Activated CD4-positive, alpha-beta T cell treated with anti-CD3 and anti-CD28 coated beads, Interleukin-2, amount 10 ng/mL, durations not matched to agents 7 days and 5 days (primary cell): ENCODE measurements at regions of chr10 and their contacts with region 1.

Region 1: DNA sequence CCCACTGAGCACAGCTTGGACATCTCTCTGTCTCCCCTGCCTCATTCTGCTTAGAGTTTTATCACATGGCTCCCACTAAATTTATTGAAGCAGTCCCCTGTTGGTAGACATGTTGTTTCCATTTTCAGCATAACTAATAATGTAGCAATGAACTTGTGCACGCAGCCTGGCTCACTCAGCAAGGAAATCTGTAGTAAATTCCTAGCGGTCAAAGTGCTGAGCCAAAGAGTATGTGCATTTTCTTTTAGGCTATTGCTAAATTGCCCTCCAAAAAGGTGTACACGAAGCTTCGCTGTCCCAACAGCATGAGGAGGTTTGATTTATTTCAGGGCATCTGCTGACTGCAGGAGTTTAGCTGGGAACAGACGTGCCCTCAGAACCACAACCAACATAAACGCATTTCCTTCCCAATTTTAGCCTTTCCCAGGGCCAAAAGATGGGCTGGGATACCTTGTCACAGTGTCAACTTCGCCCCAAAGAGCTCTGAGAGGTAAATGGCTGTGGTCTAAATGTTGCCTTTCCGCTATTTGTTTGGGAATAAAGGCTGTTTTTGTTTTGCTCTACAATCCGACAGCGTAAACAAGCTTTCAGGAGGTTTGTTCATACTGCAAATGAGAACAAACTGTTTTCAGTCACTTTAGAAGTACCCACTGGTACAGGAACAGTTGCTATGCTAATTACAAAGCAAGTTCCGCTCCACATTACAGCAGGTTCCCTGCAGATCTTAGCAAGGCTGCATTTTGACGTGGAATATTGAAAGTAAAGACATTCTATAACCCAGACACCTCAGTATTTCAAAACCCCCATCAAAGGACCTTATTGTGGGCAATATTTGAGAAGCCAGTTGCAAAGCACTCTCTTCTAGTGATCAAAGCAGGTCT is 16.8 kb downstream of the VSIR start:
- DNase-seq: peak; percentile 53
- H3K4me3 Mint-ChIP-seq: peak overlapping the region; percentile 50
- H3K27ac Mint-ChIP-seq: peak overlapping the region; percentile 93
- H3K4me1 Mint-ChIP-seq: peaks cover 89% of the 10 kb centered on the region
- H3K27me3 Mint-ChIP-seq: no peaks in the 10 kb centered on the region

Region 2: DNA sequence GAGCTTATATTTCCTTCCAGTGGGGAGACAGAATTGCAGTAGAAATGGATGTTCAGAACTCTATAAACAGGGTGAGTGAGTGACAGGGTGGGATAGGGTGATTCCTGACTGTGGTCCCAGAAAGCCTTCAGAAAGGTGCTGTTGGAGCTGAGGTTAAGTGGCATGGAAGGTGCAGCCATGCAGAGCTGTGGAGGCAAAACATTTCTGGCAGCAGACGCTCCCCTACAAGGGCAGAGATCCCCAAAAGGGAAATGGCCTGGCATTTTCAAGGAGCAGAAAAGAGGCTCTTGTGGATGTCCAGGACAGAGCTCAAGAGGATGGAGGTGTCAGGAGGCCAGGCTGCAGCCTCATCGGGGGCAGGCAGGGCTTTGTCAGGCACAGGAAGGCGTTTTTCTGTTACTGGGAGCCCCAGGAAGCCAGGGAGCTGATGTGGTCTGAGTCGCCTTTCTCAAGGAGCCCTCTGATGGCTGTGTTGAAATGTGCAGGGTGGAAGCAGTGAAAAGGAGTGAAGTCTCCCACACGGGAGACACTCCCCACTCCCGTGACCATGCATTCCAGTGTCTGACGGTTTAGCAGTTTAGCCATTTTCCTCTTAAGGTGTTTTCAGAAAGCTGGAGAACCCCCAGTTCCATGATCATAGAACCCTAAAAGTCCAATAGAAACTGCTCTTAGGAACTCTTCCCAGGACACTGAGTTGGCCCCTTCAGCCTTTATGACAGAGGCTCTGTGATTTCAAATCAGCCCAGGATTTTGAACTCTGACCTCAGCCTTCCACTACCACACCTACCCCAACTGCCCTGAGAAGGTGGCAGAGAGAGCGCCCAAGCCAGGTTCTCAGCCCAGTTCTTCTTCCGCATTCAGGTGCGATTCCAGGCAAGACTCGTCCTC is 133.2 kb before region 1 on chr10:
- CTCF ChIA-PET with region 1: no interaction called
- POLR2A ChIA-PET with region 1: no interaction called
- DNase-seq: peak; percentile 13
- H3K4me3 Mint-ChIP-seq: no peak overlapping the region
- H3K27ac Mint-ChIP-seq: no peak overlapping the region
- H3K4me1 Mint-ChIP-seq: no peaks in the 10 kb centered on the region
- H3K27me3 Mint-ChIP-seq: peaks cover 2% of the 10 kb centered on the region

Region 3: GRCh38 chr10:71685554-71686232 is 70.9 kb before region 1 on chr10:
- CTCF ChIA-PET with region 1: no interaction called
- POLR2A ChIA-PET with region 1: no interaction called
- DNase-seq: no peak
- H3K4me3 Mint-ChIP-seq: no peak overlapping the region
- H3K27ac Mint-ChIP-seq: no peak overlapping the region
- H3K4me1 Mint-ChIP-seq: peaks cover 3% of the 10 kb centered on the region
- H3K27me3 Mint-ChIP-seq: peaks cover 1% of the 10 kb centered on the region

Region 4: GRCh38 chr10:71766702-71767419 is 10.3 kb after region 1 on chr10:
- CTCF ChIA-PET with region 1: interaction called, 39 read pairs
- POLR2A ChIA-PET with region 1: interaction called, 6 read pairs
- DNase-seq: no peak
- H3K4me3 Mint-ChIP-seq: no peak overlapping the region
- H3K27ac Mint-ChIP-seq: peak overlapping the region; percentile 82
- H3K4me1 Mint-ChIP-seq: peaks cover 88% of the 10 kb centered on the region
- H3K27me3 Mint-ChIP-seq: no peaks in the 10 kb centered on the region